ENCODE measurements at regions of chr10 and their contacts with region 1.

Region 1: DNA sequence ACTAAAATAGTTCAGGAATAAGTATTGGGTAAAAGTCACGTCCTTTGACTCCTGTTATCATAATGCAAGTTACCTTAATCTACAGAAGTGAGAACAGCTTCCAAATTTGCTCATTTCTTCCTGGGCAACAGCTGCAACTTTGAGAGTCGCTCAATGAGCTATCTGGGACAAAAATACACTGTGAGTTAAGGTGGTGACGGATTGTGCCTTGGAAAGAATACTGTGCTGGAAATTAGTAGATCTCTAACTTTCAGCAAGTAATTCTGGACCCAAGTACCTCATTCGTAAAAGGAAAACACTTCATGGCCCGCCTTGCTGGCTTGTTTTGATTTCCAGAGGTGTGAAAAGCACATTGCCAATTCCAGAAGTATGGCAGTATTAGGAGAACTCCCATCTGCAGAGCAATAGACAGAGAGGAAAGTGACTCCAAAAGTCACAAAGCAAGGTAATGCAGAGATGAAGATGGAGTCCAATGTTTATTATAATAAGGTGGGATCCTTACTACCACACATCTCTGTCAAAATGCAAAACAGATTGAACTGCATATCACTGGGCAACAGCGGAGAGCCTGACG is 626.0 kb downstream of the SORCS3 start:
- DNase-seq: no peak
- ATAC-seq: peak in 3 of 8 donors; percentile 57 to 79 (median 71)
- H3K4me3 ChIP-seq: no peak overlapping the region
- H3K27ac ChIP-seq: peak overlapping the region in 1 of 10 donors; percentile 3
- H3K4me1 ChIP-seq: peaks cover 0 to 4% (median 0%) of the 10 kb centered on the region in 9 donors
- H3K27me3 ChIP-seq: no peaks in the 10 kb centered on the region
- CTCF ChIP-seq: no peak

Region 2: GRCh38 chr10:105138358-105138757 is 128.7 kb before region 1 on chr10:
- intact Hi-C with region 1: loop called in 1 of 10 experiments (anchors 5 kb)
- DNase-seq: peak in 1 of 2 donors; percentile 55
- ATAC-seq: peak in 6 of 8 donors; percentile 30 to 79 (median 74)
- H3K4me3 ChIP-seq: no peak overlapping the region
- H3K27ac ChIP-seq: peak overlapping the region in 3 of 10 donors; percentile 4 to 48 (median 25)
- H3K4me1 ChIP-seq: no peaks in the 10 kb centered on the region
- H3K27me3 ChIP-seq: no peaks in the 10 kb centered on the region
- CTCF ChIP-seq: no peak

Region 3: GRCh38 chr10:105161767-105162166 is 105.3 kb before region 1 on chr10:
- intact Hi-C with region 1: no loop called
- DNase-seq: no peak
- ATAC-seq: no peak
- H3K4me3 ChIP-seq: no peak overlapping the region
- H3K27ac ChIP-seq: no peak overlapping the region
- H3K4me1 ChIP-seq: no peaks in the 10 kb centered on the region
- H3K27me3 ChIP-seq: peaks cover 0 to 7% (median 0%) of the 10 kb centered on the region in 7 donors
- CTCF ChIP-seq: no peak